Aorta (tissue), 5 donors: ENCODE measurements at regions of chrX and their contacts with region 1.

Region 1: DNA sequence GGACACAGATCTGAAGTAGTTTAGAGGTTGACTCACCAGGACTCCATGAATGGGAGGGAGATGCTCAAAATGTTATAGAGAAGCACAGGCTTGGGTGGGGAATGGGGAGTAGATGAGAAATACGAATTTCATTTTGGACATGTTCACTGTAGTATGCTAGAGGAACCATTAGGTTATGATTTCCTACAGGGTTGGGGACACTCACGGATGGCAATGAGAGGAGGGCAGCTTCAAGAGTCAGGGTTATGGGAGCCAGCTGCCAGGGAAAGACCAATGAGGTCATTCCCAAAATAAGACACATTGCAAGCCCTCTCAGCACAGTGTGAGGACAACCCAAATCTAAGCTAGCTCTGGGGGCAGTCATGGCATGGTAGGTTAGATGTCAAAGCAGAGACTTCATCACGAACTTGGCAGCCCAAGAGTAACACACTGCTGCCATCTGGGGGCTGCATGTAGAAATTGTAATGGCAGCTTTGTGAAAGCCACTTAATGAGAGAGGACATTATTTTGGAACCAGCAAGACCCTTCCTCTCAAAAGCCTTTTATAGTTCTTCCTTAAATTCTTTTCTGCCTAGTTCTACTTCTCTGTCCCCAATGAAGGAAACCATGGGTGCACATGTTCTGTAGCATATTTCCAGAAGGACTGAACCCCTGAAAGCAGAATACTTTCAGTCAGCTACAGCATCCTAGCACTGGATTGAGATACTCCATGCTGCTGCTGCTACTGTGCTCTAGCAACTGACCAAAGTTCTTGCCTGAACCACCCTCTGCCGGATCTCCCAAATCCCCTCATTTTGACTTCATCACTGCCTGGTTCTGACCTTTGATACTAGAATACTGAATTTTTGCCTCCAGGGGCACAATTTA is 16.2 kb upstream of the ZCCHC12 start:
- DNase-seq: peak in 1 of 2 donors; percentile 53
- ATAC-seq: peak; percentile 77
- H3K4me3 ChIP-seq: no peak overlapping the region
- H3K27ac ChIP-seq: no peak overlapping the region
- H3K4me1 ChIP-seq: no peaks in the 10 kb centered on the region
- H3K27me3 ChIP-seq: no peaks in the 10 kb centered on the region

Region 2: GRCh38 chrX:116972362-116972761 is 1835.0 kb before region 1 on chrX:
- intact Hi-C with region 1: no loop called
- DNase-seq: no peak
- ATAC-seq: no peak
- H3K4me3 ChIP-seq: no peak overlapping the region
- H3K27ac ChIP-seq: no peak overlapping the region
- H3K4me1 ChIP-seq: no peaks in the 10 kb centered on the region
- H3K27me3 ChIP-seq: no peaks in the 10 kb centered on the region

Region 3: GRCh38 chrX:118286066-118286762 is 521.2 kb before region 1 on chrX:
- intact Hi-C with region 1: no loop called
- DNase-seq: no peak
- ATAC-seq: no peak
- H3K4me3 ChIP-seq: no peak overlapping the region
- H3K27ac ChIP-seq: no peak overlapping the region
- H3K4me1 ChIP-seq: no peaks in the 10 kb centered on the region
- H3K27me3 ChIP-seq: no peaks in the 10 kb centered on the region

Region 4: GRCh38 chrX:118459494-118459893 is 347.9 kb before region 1 on chrX:
- intact Hi-C with region 1: loop called in 1 of 2 experiments (anchors 10 kb)
- DNase-seq: no peak
- ATAC-seq: no peak
- H3K4me3 ChIP-seq: no peak overlapping the region
- H3K27ac ChIP-seq: no peak overlapping the region
- H3K4me1 ChIP-seq: no peaks in the 10 kb centered on the region
- H3K27me3 ChIP-seq: no peaks in the 10 kb centered on the region

Region 5: GRCh38 chrX:118644378-118644777 is 163.0 kb before region 1 on chrX:
- intact Hi-C with region 1: loop called (anchors 5 kb)
- DNase-seq: no peak
- ATAC-seq: no peak
- H3K4me3 ChIP-seq: no peak overlapping the region
- H3K27ac ChIP-seq: no peak overlapping the region
- H3K4me1 ChIP-seq: no peaks in the 10 kb centered on the region
- H3K27me3 ChIP-seq: no peaks in the 10 kb centered on the region

Region 6: GRCh38 chrX:118745570-118745969 is 61.8 kb before region 1 on chrX:
- intact Hi-C with region 1: no loop called
- DNase-seq: no peak
- ATAC-seq: no peak
- H3K4me3 ChIP-seq: no peak overlapping the region
- H3K27ac ChIP-seq: no peak overlapping the region
- H3K4me1 ChIP-seq: no peaks in the 10 kb centered on the region
- H3K27me3 ChIP-seq: no peaks in the 10 kb centered on the region

Region 7: GRCh38 chrX:118872102-118872566 is 64.8 kb after region 1 on chrX:
- intact Hi-C with region 1: no loop called
- DNase-seq: no peak
- ATAC-seq: peak; percentile 79
- H3K4me3 ChIP-seq: no peak overlapping the region
- H3K27ac ChIP-seq: peak overlapping the region; percentile 9 to 88
- H3K4me1 ChIP-seq: peaks cover 0 to 7% of the 10 kb centered on the region in 2 donors
- H3K27me3 ChIP-seq: no peaks in the 10 kb centered on the region